PC-3 (cell line): ENCODE measurements at regions of chr11 and their contacts with region 1.

Region 1: DNA sequence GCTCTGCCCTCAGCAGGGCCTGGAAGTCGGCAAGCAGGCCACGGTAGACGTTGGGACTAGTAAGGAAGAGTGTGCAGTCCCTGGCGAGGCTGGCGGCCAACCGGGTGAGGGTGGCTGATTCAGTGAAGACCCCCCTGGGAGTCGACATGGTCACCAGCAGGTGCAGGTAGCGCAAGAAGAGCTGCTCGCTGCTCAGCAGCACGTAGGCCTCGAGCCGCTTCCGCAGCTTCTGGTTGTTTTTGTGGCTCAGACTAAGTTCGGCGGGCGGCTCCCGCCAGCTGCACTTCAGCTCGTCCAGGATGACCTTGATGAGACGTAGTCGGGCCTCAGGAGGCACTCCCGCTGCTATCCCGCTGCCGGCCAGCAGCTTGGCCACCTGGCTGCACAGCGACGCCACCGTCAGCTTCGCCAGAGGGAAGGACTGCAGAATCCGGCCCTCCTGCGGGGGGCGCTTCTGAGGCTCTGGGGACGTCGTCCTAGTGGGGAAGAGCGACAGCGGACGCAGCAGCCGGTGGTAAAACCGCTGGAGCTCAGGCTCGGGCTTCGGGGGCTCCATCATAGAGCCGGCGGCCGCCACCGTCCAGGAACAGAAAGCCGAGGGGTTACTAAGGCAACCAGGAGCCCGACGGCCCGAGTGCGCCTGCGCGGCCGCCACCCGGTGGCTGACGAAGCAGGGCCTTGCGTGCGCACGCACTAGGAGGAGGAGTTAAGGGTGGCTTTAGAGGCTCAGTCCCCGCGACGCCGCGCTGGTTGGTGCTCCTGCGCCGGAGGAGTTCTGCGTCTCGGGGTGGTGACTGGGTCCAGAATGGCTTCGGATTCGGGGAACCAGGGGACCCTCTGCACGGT is at the starts of genes CCDC87 and CCS:
- DNase-seq: peak; percentile 99
- ATAC-seq: peak; percentile 99
- H3K4me3 ChIP-seq: peak within 1 kb of the TSS; percentile 77
- H3K27ac ChIP-seq: no peak within 1 kb of the TSS
- H3K4me1 ChIP-seq: peaks cover 15% of the 10 kb centered on the region
- H3K27me3 ChIP-seq: no peaks in the 10 kb centered on the region
- CTCF ChIP-seq: peak; percentile 83
- total RNA-seq, gene CCDC87: 0.69 TPM in 1 of 2 replicates, not detected in the other
- total RNA-seq, gene CCS: 43.8 and 56.8 TPM in 2 replicates

Region 2: GRCh38 chr11:66491315-66491935 is 101.3 kb before region 1 on chr11:
- CTCF ChIA-PET with region 1: no interaction called
- POLR2A ChIA-PET with region 1: no interaction called
- intact Hi-C with region 1: no loop called
- DNase-seq: no peak
- ATAC-seq: peak; percentile 69; the same call in 1 of the 2 replicates
- H3K4me3 ChIP-seq: no peak overlapping the region
- H3K27ac ChIP-seq: no peak overlapping the region
- H3K4me1 ChIP-seq: no peaks in the 10 kb centered on the region
- H3K27me3 ChIP-seq: no peaks in the 10 kb centered on the region
- CTCF ChIP-seq: peak; percentile 51; the same call in 1 of the 2 replicates

Region 3: GRCh38 chr11:66545701-66546367 is 46.8 kb before region 1 on chr11 and contains the start of gene ZDHHC24:
- CTCF ChIA-PET with region 1: no interaction called
- POLR2A ChIA-PET with region 1: no interaction called
- intact Hi-C with region 1: loop called (anchors 1 kb)
- DNase-seq: peak; percentile 99
- ATAC-seq: peak; percentile 96
- H3K4me3 ChIP-seq: peak within 1 kb of the TSS; percentile 89
- H3K27ac ChIP-seq: 0 out of 2 replicates have a peak within 1 kb of the TSS, but pooled peaks have one; percentile 10
- H3K4me1 ChIP-seq: peaks cover 21% of the 10 kb centered on the region
- H3K27me3 ChIP-seq: no peaks in the 10 kb centered on the region
- CTCF ChIP-seq: no peak
- total RNA-seq, gene ZDHHC24: 15.1 and 19.7 TPM in 2 replicates

Region 4: DNA sequence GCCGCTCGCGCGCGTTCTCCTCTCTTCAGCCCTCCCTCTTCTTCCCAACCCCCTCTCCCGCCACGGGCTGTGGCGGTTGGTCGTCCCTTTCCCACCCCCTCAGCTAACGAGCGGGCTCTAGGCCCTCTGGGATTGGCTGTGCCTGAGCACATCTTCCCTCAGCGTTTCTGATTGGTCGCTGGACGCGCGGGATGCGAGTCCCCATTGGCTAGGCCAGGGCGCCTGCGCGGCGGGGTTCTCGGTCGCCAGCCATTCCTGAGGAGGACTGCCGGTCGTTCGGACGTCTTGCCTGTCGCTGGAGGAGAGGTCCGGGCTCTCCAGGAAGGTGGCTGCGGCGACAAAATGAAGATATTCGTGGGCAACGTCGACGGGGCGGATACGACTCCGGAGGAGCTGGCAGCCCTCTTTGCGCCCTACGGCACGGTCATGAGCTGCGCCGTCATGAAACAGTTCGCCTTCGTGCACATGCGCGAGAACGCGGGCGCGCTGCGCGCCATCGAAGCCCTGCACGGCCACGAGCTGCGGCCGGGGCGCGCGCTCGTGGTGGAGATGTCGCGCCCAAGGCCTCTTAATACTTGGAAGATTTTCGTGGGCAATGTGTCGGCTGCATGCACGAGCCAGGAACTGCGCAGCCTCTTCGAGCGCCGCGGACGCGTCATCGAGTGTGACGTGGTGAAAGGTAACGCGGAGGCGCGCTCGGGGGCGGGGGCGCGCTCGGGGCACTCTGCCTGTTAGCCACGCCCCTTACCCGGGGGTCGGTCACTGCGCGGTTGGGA is 23.9 kb after region 1 on chr11 and contains the start of gene RBM14:
- CTCF ChIA-PET with region 1: interaction called, 10 read pairs
- POLR2A ChIA-PET with region 1: interaction called, 3 read pairs
- intact Hi-C with region 1: loop called (anchors 2 kb)
- DNase-seq: peak; percentile 100
- ATAC-seq: peak; percentile 94
- H3K4me3 ChIP-seq: peak within 1 kb of the TSS; percentile 89
- H3K27ac ChIP-seq: peak within 1 kb of the TSS; percentile 77
- H3K4me1 ChIP-seq: peaks cover 34% of the 10 kb centered on the region
- H3K27me3 ChIP-seq: no peaks in the 10 kb centered on the region
- CTCF ChIP-seq: no peak
- total RNA-seq, gene RBM14: 79.3 and 119 TPM in 2 replicates

Region 5: DNA sequence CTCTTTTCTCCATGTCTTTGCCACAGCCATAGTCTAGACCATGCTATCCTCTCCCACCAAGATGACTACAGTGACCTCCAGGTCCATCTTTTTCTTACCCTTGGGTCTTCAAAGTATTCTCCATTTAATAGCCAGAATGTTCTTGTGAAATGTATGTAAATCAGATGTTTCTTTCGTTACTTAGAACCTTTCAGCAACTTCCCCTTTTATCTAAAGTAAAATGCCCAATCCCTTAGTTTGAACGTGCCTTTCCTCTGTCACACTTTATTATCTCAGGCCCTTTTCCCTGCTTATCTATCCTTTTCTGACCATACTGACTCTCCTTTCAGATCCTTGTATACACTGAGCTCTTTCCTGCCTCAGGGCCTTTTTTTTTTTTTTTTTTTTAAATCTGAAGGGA is 67.1 kb after region 1 on chr11:
- CTCF ChIA-PET with region 1: interaction called, 10 read pairs
- POLR2A ChIA-PET with region 1: no interaction called
- intact Hi-C with region 1: no loop called
- DNase-seq: no peak
- ATAC-seq: no peak
- H3K4me3 ChIP-seq: no peak overlapping the region
- H3K27ac ChIP-seq: no peak overlapping the region
- H3K4me1 ChIP-seq: no peaks in the 10 kb centered on the region
- H3K27me3 ChIP-seq: no peaks in the 10 kb centered on the region
- CTCF ChIP-seq: no peak

Region 6: DNA sequence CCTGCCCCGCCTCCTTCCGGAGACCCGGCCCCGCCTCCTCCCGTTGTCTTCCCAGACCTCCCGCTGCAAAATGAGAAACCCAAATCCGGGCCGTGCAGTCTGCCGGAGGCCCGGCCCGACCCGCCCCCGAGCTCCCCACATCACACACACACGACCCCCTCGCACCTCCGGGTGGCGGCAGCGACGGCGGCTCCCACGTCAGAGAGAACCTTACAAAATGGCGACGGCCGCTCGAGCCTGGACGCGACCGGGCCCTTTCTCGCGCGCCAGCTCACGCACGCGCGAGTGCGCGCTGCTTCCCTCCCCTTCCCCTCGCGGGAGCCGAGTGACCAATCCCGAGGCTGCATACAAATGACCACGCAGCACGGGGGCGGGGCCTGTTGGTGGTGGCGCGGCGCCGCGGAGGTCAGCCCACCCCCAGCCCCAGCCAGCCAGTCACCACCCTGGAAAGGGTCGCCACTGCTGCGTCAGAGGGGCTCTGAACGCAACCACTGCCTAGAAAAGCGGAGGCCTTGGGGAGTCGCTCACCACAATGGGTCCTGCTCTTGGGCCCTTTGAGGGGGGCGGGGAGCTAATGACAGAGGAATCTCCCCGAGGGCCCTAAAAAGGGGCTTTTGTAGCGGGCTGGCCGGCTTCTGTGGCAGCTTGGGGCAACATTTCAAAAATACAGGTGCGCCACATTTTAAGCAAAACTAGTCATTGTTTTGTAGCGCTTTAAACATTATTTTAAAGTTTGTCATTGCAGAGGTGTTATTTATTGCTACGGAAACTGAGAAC is 85.1 kb after region 1 on chr11 and contains the start of gene RBM4B:
- CTCF ChIA-PET with region 1: no interaction called
- POLR2A ChIA-PET with region 1: no interaction called
- intact Hi-C with region 1: loop called (anchors 1 kb)
- DNase-seq: peak; percentile 97
- ATAC-seq: peak; percentile 92
- H3K4me3 ChIP-seq: peak within 1 kb of the TSS; percentile 68
- H3K27ac ChIP-seq: peak within 1 kb of the TSS; percentile 86
- H3K4me1 ChIP-seq: peaks cover 35% of the 10 kb centered on the region
- H3K27me3 ChIP-seq: no peaks in the 10 kb centered on the region
- CTCF ChIP-seq: no peak
- total RNA-seq, gene RBM4B: 31.4 and 40.2 TPM in 2 replicates

Region 7: GRCh38 chr11:66727282-66727882 is 134.7 kb after region 1 on chr11:
- CTCF ChIA-PET with region 1: no interaction called
- POLR2A ChIA-PET with region 1: no interaction called
- intact Hi-C with region 1: no loop called
- DNase-seq: peak; percentile 50
- ATAC-seq: peak; percentile 33
- H3K4me3 ChIP-seq: peak overlapping the region; percentile 77
- H3K27ac ChIP-seq: peak overlapping the region; percentile 27
- H3K4me1 ChIP-seq: peaks cover 44% of the 10 kb centered on the region
- H3K27me3 ChIP-seq: no peaks in the 10 kb centered on the region
- CTCF ChIP-seq: no peak